ENCODE measurements at regions of chr12 and their contacts with region 1.

Region 1: GRCh38 chr12:120437754-120438494 is at the start of gene COX6A1:
- DNase-seq: peak; percentile 87 to 100 (median 97)
- ATAC-seq: peak; percentile 95 to 98 (median 97)
- H3K4me3 ChIP-seq: peak within 1 kb of the TSS; percentile 85 to 93
- H3K4me3 Mint-ChIP-seq: peak within 1 kb of the TSS; percentile 86 to 95 (median 94)
- H3K27ac ChIP-seq: peak within 1 kb of the TSS; percentile 79
- H3K27ac Mint-ChIP-seq: peak within 1 kb of the TSS; percentile 92 to 94
- H3K4me1 ChIP-seq: peaks cover 20 to 26% of the 10 kb centered on the region in 2 experiments
- H3K4me1 Mint-ChIP-seq: peaks cover 29 to 30% (median 29%) of the 10 kb centered on the region in 3 donors
- H3K27me3 ChIP-seq: peaks cover 0 to 5% of the 10 kb centered on the region in 2 experiments
- H3K27me3 Mint-ChIP-seq: peaks cover 0 to 3% of the 10 kb centered on the region in 2 donors
- total RNA-seq, gene COX6A1: 128 to 171 (median 163) TPM

Region 2: GRCh38 chr12:120469450-120470149 is 31.7 kb after region 1 on chr12 and contains the start of gene SRSF9:
- CTCF ChIA-PET with region 1: interaction called in 1 of 2 experiments, 14 read pairs
- POLR2A ChIA-PET with region 1: interaction called in 1 of 2 experiments, 4 read pairs
- DNase-seq: peak; percentile 93 to 100 (median 96)
- ATAC-seq: peak; percentile 84 to 94 (median 92)
- H3K4me3 ChIP-seq: peak within 1 kb of the TSS; percentile 72 to 89
- H3K4me3 Mint-ChIP-seq: peak within 1 kb of the TSS; percentile 86 to 88 (median 87)
- H3K27ac ChIP-seq: peak within 1 kb of the TSS; percentile 62
- H3K27ac Mint-ChIP-seq: peak within 1 kb of the TSS; percentile 87 to 90
- H3K4me1 ChIP-seq: peaks cover 10 to 38% of the 10 kb centered on the region in 2 experiments
- H3K4me1 Mint-ChIP-seq: peaks cover 42 to 52% (median 51%) of the 10 kb centered on the region in 3 donors
- H3K27me3 ChIP-seq: no peaks in the 10 kb centered on the region
- H3K27me3 Mint-ChIP-seq: no peaks in the 10 kb centered on the region
- total RNA-seq, gene SRSF9: 134 to 149 (median 135) TPM

Region 3: GRCh38 chr12:120760413-120761254 is 322.7 kb after region 1 on chr12:
- CTCF ChIA-PET with region 1: no interaction called
- POLR2A ChIA-PET with region 1: no interaction called
- DNase-seq: peak in 29 of 35 experiments; percentile 8 to 64 (median 21)
- ATAC-seq: peak; percentile 50 to 84 (median 72)
- H3K4me3 ChIP-seq: no peak overlapping the region
- H3K4me3 Mint-ChIP-seq: peak overlapping the region; percentile 19 to 53 (median 45)
- H3K27ac ChIP-seq: peak overlapping the region; percentile 33
- H3K27ac Mint-ChIP-seq: peak overlapping the region; percentile 83 to 92
- H3K4me1 ChIP-seq: peaks cover 0 to 9% of the 10 kb centered on the region in 2 experiments
- H3K4me1 Mint-ChIP-seq: peaks cover 18 to 27% (median 20%) of the 10 kb centered on the region in 3 donors
- H3K27me3 ChIP-seq: no peaks in the 10 kb centered on the region
- H3K27me3 Mint-ChIP-seq: no peaks in the 10 kb centered on the region